ENCODE measurements at regions of chr13 and their contacts with region 1.

Region 1: GRCh38 chr13:19863323-19864023 is at the start of gene ZMYM5:
- DNase-seq: peak; percentile 96
- H3K4me3 Mint-ChIP-seq: peak within 1 kb of the TSS; percentile 98
- H3K27ac Mint-ChIP-seq: peak within 1 kb of the TSS; percentile 99
- H3K4me1 Mint-ChIP-seq: peaks cover 33% of the 10 kb centered on the region
- H3K27me3 Mint-ChIP-seq: no peaks in the 10 kb centered on the region
- total RNA-seq, gene ZMYM5: 13.7 and 16.1 TPM in 2 replicates

Region 2: DNA sequence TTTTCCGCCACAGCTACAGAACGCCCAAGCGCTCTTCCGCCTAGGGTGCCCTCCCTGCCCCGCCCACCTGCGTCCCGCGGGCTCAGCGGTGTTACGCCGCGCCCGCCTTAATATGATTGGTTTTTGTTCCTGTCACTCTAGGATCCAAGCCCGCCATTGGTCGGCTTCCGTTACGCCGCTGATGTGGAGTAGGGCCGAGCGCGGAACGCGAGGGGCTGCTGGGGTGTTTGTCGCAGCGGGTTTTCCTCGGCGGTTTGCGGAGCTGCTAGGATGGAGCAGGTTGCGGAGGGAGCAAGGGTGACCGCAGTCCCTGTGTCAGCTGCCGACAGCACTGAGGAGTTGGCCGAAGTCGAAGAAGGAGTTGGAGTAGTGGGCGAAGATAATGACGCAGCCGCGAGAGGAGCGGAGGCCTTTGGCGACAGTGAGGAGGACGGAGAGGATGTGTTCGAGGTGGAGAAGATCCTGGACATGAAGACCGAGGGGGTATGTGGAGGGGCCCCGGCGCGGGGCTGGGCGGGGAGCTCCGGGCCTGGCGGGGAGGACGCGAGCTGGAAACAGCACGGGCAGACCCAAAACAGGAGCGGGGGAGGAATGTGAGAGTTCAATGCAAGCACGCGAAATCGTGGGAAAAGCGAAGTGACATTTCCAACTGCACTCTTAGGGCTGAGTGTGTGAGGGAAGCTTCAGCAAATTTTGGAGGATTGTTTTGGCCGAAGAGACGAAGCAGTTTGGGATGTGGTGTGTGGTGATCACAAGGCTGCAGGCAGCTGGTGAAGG is 229.8 kb before region 1 on chr13 and contains the start of gene MPHOSPH8:
- intact Hi-C with region 1: loop called (anchors 1 kb)
- DNase-seq: peak; percentile 91
- H3K4me3 Mint-ChIP-seq: peak within 1 kb of the TSS; percentile 99
- H3K27ac Mint-ChIP-seq: peak within 1 kb of the TSS; percentile 98
- H3K4me1 Mint-ChIP-seq: peaks cover 19% of the 10 kb centered on the region
- H3K27me3 Mint-ChIP-seq: no peaks in the 10 kb centered on the region
- total RNA-seq, gene MPHOSPH8: 43.5 and 46.4 TPM in 2 replicates

Region 3: GRCh38 chr13:19713186-19713965 is 150.1 kb before region 1 on chr13:
- intact Hi-C with region 1: loop called (anchors 5 kb)
- DNase-seq: no peak
- H3K4me3 Mint-ChIP-seq: no peak overlapping the region
- H3K27ac Mint-ChIP-seq: peak overlapping the region; percentile 40
- H3K4me1 Mint-ChIP-seq: peaks cover 24% of the 10 kb centered on the region
- H3K27me3 Mint-ChIP-seq: no peaks in the 10 kb centered on the region

Region 4: DNA sequence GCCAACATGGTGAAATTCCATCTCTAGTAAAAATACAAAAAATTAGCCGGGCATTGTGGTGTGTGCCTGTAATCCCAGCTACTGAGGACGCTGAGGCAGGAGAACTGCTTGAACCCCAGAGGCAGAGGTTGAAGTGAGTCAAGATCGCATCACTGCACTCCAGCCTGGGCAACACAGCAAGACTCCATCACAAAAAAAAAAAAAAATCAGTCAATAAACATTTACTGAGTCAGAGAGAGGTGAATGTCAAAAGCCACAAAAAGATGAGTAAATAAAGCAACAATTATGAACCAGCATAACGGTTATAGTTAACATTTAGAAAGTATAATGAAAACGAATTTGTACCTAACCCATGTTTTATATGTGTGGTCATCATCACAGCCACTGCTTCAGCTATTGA is 103.8 kb before region 1 on chr13:
- intact Hi-C with region 1: loop called (anchors 5 kb)
- DNase-seq: no peak
- H3K4me3 Mint-ChIP-seq: no peak overlapping the region
- H3K27ac Mint-ChIP-seq: no peak overlapping the region
- H3K4me1 Mint-ChIP-seq: peaks cover 23% of the 10 kb centered on the region
- H3K27me3 Mint-ChIP-seq: no peaks in the 10 kb centered on the region

Region 5: GRCh38 chr13:19782049-19782726 is 81.3 kb before region 1 on chr13:
- intact Hi-C with region 1: loop called (anchors 1 kb)
- DNase-seq: peak; percentile 62
- H3K4me3 Mint-ChIP-seq: peak overlapping the region; percentile 93
- H3K27ac Mint-ChIP-seq: peak overlapping the region; percentile 97
- H3K4me1 Mint-ChIP-seq: peaks cover 2% of the 10 kb centered on the region
- H3K27me3 Mint-ChIP-seq: peaks cover 1% of the 10 kb centered on the region

Measured in activated T-helper 2 cell treated with anti-CD3 and anti-CD28 coated beads, Interferon-gamma antibody, Interleukin-2, Interleukin-4, amounts not matched to agents 10 μg/mL and 5 μg/mL and 100 μg/mL, durations not matched to agents 14 hours and 24 hours and 36 hours (primary cell).